Testis (tissue), 5 donors: ENCODE measurements at regions of chr5 and their contacts with region 1.

Region 1: DNA sequence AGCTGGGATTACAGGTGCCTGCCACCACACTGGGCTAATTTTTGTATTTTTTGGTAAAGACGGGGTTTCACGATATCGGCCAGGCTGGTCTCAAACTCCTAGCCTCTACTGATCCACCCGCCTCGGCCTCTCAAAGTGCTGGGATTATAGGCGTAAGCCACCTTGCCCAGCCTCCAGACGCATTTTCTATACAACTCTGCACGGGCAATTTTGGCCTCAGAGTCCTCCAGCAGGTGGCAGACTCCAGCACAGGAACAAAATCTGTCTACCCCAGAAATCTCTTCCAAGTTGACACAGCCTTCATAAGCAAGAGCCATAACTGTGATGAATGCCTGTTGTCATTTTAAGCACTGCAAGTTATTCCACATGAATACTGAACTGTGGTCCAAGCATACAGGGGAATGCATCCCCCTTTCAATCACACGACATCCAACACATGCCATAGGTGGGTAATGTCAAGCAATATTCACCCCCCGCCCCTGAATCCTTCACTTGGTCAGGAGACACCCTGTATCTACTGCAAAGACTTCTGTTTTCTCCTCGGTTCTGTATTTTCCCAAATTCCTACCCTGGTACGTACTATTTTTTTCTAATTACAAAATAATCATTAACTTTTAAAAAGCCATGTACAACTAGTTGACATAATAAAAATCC is 50.8 kb downstream of the ALDH7A1 start:
- DNase-seq: peak; percentile 73
- H3K4me3 ChIP-seq: no peak overlapping the region
- H3K27ac ChIP-seq: no peak overlapping the region
- H3K4me1 ChIP-seq: no peaks in the 10 kb centered on the region
- H3K27me3 ChIP-seq: no peaks in the 10 kb centered on the region
- CTCF ChIP-seq: peak; percentile 26 to 45 (median 36)
- POLR2A ChIP-seq: no peak

Region 2: GRCh38 chr5:126274076-126274762 is 270.0 kb before region 1 on chr5:
- intact Hi-C with region 1: no loop called
- DNase-seq: no peak
- H3K4me3 ChIP-seq: no peak overlapping the region
- H3K27ac ChIP-seq: no peak overlapping the region
- H3K4me1 ChIP-seq: no peaks in the 10 kb centered on the region
- H3K27me3 ChIP-seq: no peaks in the 10 kb centered on the region
- CTCF ChIP-seq: no peak
- POLR2A ChIP-seq: no peak

Region 3: GRCh38 chr5:126348855-126349635 is 195.2 kb before region 1 on chr5:
- intact Hi-C with region 1: loop called (anchors 5 kb)
- DNase-seq: no peak
- H3K4me3 ChIP-seq: no peak overlapping the region
- H3K27ac ChIP-seq: no peak overlapping the region
- H3K4me1 ChIP-seq: no peaks in the 10 kb centered on the region
- H3K27me3 ChIP-seq: no peaks in the 10 kb centered on the region
- CTCF ChIP-seq: no peak
- POLR2A ChIP-seq: no peak